Colonic mucosa (tissue), 4 donors: ENCODE measurements at regions of chr3 and their contacts with region 1.

Region 1: DNA sequence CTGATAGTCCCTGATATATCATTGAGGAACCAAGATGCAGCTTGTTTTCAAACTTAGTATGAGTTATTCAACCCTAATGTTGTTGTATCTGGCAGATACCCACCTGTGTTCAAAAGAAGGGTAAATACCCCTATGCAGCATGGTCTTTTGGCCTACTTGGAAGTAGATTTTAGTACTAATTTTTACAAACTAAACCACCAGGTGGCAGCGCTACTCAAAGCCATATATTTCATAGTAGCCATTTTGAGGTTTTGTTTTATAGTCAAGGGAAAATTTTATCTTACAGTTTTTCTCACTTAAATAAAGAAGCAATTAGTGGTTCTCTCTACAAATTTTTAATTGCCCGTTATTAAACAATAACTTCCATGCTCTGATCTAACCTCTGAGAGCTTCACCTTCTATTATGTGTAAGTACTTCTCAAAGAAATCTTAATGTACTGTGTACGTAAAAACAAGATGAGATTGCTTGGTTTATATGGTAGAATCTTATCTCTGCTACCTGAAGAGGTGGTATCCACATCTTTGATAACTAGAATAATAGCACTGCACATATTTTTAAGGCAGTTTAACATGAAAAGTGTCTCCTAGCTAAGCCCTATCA is 31.5 kb upstream of the MLF1 start:
- DNase-seq: peak; percentile 47
- H3K4me3 ChIP-seq: no peak overlapping the region
- H3K27ac ChIP-seq: no peak overlapping the region
- H3K4me1 ChIP-seq: no peaks in the 10 kb centered on the region
- H3K27me3 ChIP-seq: no peaks in the 10 kb centered on the region
- CTCF ChIP-seq: peak; percentile 36

Region 2: GRCh38 chr3:157618075-157618760 is 921.3 kb before region 1 on chr3:
- intact Hi-C with region 1: loop called (anchors 10 kb)
- DNase-seq: no peak
- H3K4me3 ChIP-seq: no peak overlapping the region
- H3K27ac ChIP-seq: no peak overlapping the region
- H3K4me1 ChIP-seq: no peaks in the 10 kb centered on the region
- H3K27me3 ChIP-seq: peaks cover 5% of the 10 kb centered on the region
- CTCF ChIP-seq: peak; percentile 54

Region 3: DNA sequence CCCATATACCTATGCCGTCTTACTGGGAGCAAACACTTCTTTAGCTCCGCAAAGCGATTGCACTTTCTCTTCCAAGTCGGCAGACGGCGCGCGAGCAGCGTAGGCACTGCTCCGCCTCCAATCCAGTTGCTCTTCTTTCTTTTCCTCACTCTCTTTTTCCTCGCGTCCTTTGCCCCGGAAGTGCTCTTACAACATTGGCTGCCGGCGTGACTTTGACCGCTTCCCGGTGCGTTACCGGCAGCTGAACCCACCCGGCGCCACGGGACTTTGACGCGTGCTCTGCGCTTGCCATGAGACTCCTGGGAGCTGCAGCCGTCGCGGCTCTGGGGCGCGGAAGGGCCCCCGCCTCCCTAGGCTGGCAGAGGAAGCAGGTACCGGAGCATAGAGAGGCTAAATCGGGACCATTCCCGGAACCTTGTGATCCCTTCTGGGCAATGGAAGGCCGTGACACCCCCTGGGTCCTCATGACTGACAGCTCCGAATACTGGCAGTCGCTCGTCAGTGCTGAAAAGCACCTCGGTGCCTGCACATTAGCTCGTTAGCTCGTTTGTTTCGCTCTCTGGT is 104.9 kb after region 1 on chr3 and contains the start of gene GFM1:
- intact Hi-C with region 1: loop called (anchors 5 kb)
- DNase-seq: peak; percentile 94
- H3K4me3 ChIP-seq: peak within 1 kb of the TSS; percentile 60
- H3K27ac ChIP-seq: peak within 1 kb of the TSS; percentile 47
- H3K4me1 ChIP-seq: no peaks in the 10 kb centered on the region
- H3K27me3 ChIP-seq: no peaks in the 10 kb centered on the region
- CTCF ChIP-seq: peak; percentile 78
- total RNA-seq, gene GFM1: 40.9 to 61.6 TPM

Region 4: GRCh38 chr3:158790901-158791589 is 251.5 kb after region 1 on chr3:
- intact Hi-C with region 1: loop called (anchors 5 kb)
- DNase-seq: no peak
- H3K4me3 ChIP-seq: no peak overlapping the region
- H3K27ac ChIP-seq: no peak overlapping the region
- H3K4me1 ChIP-seq: no peaks in the 10 kb centered on the region
- H3K27me3 ChIP-seq: no peaks in the 10 kb centered on the region
- CTCF ChIP-seq: peak; percentile 84